Left ventricle myocardium inferior (tissue), 1 donor: ENCODE measurements at regions of chr3 and their contacts with region 1.

Region 1: DNA sequence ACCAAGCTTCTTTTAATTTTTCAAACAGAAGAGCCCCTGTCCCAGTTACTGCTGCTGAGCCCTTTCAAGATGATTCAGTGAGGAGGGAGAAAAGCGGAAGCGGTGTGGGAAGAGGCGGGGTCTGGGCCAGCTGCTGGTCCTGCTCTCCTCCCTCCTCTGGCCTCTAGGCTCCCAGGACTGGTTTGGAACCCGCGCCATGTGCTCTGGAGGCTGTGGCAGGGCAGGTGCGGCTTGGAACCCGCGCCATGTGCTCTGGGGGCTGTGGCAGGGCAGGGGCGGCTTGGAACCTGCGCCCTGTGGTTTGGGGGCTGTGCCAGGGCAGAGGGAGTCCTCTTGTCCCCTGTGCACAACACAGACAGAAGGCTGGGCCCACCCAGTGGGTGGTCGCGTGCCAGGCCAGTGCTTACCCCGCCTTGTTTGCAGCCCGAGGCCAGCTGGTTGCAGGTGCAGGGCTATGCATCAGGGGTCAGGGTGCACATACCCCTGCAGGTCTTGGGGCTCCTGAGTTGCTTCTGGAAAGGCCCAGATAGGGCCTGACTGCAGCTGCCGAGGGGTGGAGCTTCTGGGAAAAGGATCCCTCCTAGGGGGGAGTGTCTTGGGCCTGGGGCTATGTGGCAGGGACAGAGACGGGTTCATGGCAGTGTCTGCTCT is 12.2 kb downstream of the ALG1L2 start:
- DNase-seq: no peak
- H3K4me3 ChIP-seq: no peak overlapping the region
- H3K27ac ChIP-seq: no peak overlapping the region
- H3K4me1 ChIP-seq: no peaks in the 10 kb centered on the region
- H3K27me3 ChIP-seq: peaks cover 3% of the 10 kb centered on the region
- CTCF ChIP-seq: no peak

Region 2: DNA sequence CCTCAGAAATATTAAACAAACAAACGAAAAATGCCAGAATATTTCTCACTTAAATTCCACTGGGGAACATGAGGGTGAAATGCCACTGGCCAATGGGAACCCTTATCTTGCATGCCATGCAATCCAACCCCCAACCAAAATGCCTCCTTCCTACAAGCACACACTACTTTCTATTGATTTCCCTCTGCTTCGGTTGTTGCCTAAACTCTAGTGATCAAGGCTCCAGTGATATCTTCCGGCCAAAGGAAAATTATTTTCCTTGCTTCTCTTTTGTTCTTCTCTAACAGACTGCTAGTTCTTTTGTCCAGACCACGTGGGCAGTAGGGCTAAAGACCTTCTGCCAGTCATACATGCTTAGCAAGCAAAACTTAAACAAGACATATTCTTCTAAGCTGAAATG is 316.1 kb before region 1 on chr3:
- intact Hi-C with region 1: no loop called
- DNase-seq: no peak
- H3K4me3 ChIP-seq: no peak overlapping the region
- H3K27ac ChIP-seq: no peak overlapping the region
- H3K4me1 ChIP-seq: peaks cover 22% of the 10 kb centered on the region
- H3K27me3 ChIP-seq: no peaks in the 10 kb centered on the region
- CTCF ChIP-seq: no peak

Region 3: GRCh38 chr3:129942296-129942695 is 151.6 kb before region 1 on chr3:
- intact Hi-C with region 1: loop called (anchors 10 kb)
- DNase-seq: peak; percentile 44
- H3K4me3 ChIP-seq: no peak overlapping the region
- H3K27ac ChIP-seq: no peak overlapping the region
- H3K4me1 ChIP-seq: no peaks in the 10 kb centered on the region
- H3K27me3 ChIP-seq: peaks cover 18% of the 10 kb centered on the region
- CTCF ChIP-seq: peak; percentile 81